Naive thymus-derived CD8-positive, alpha-beta T cell (primary cell): ENCODE measurements at regions of chr1 and their contacts with region 1.

Region 1: GRCh38 chr1:25971066-25971810 is 26.6 kb downstream of the PAFAH2 start:
- DNase-seq: peak in 4 of 10 donors; percentile 5 to 67 (median 52)
- ATAC-seq: peak; percentile 89 to 90
- H3K4me3 Mint-ChIP-seq: peak overlapping the region; percentile 7 to 79 (median 60)
- H3K27ac Mint-ChIP-seq: peak overlapping the region; percentile 57 to 97 (median 85)
- H3K4me1 Mint-ChIP-seq: peaks cover 31 to 61% (median 33%) of the 10 kb centered on the region in 4 donors
- H3K27me3 Mint-ChIP-seq: no peaks in the 10 kb centered on the region

Region 2: GRCh38 chr1:25858906-25859789 is 112.1 kb before region 1 on chr1 and contains the start of gene AUNIP:
- POLR2A ChIA-PET with region 1: no interaction called
- DNase-seq: peak; percentile 80 to 93 (median 88)
- ATAC-seq: peak; percentile 98 to 99
- H3K4me3 Mint-ChIP-seq: peak within 1 kb of the TSS; percentile 87 to 96 (median 92)
- H3K27ac Mint-ChIP-seq: peak within 1 kb of the TSS; percentile 84 to 96 (median 95)
- H3K4me1 Mint-ChIP-seq: peaks cover 11 to 28% (median 20%) of the 10 kb centered on the region in 4 donors
- H3K27me3 Mint-ChIP-seq: peaks cover 0 to 2% (median 0%) of the 10 kb centered on the region in 5 donors
- polyA plus RNA-seq, gene AUNIP: not detected

Region 3: GRCh38 chr1:25895365-25895993 is 75.8 kb before region 1 on chr1:
- POLR2A ChIA-PET with region 1: interaction called, 10 read pairs
- DNase-seq: peak; percentile 87 to 95 (median 92)
- ATAC-seq: peak; percentile 99 to 100
- H3K4me3 Mint-ChIP-seq: no peak overlapping the region
- H3K27ac Mint-ChIP-seq: peak overlapping the region in 9 of 10 donors; percentile 4 to 85 (median 63)
- H3K4me1 Mint-ChIP-seq: peaks cover 4 to 11% (median 9%) of the 10 kb centered on the region in 4 donors
- H3K27me3 Mint-ChIP-seq: no peaks in the 10 kb centered on the region

Region 4: GRCh38 chr1:25904943-25905679 is 66.1 kb before region 1 on chr1:
- POLR2A ChIA-PET with region 1: interaction called, 10 read pairs
- DNase-seq: peak; percentile 76 to 96 (median 88)
- ATAC-seq: peak; percentile 66 to 71
- H3K4me3 Mint-ChIP-seq: peak overlapping the region; percentile 84 to 98 (median 92)
- H3K27ac Mint-ChIP-seq: peak overlapping the region; percentile 84 to 97 (median 94)
- H3K4me1 Mint-ChIP-seq: peaks cover 8 to 26% (median 19%) of the 10 kb centered on the region in 4 donors
- H3K27me3 Mint-ChIP-seq: no peaks in the 10 kb centered on the region